CD4-positive, alpha-beta T cell (primary cell): ENCODE measurements at regions of chr14 and their contacts with region 1.

Region 1: DNA sequence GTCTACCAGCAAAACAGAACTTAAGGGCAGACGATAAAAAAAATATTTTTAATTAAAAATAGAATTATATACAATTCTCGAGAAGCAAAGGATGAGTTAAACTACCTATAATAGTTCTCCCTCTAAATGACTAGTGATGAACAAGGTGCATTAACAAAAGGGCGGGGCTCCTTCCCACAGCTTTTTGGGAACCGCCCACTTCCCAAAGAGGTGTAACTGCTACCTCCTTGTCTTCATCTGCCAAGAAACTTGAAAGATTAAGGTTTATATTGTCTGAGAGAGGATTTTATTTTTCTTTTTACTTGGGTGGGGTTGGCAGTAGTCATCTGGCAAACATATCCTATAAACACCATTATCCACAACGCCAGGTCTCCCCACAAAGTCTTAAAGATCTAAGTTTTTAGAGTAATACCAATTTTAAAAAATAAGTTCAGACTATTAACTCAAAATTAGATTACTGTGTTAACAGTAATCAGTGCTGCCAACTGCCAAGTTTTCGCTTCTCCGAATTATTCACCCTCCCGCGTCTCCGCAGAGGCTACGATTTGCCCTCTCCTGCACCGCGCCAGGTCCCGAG is 931 bp downstream of the RALGAPA1 start:
- DNase-seq: peak in 6 of 14 experiments; percentile 15 to 53 (median 40)
- ATAC-seq: no peak
- H3K4me3 ChIP-seq: peak overlapping the region; percentile 85
- H3K4me3 Mint-ChIP-seq: peak overlapping the region; percentile 99
- H3K27ac ChIP-seq: peak overlapping the region; percentile 75 to 88
- H3K27ac Mint-ChIP-seq: peak overlapping the region; percentile 88
- H3K4me1 ChIP-seq: peaks cover 17% of the 10 kb centered on the region
- H3K4me1 Mint-ChIP-seq: peaks cover 44% of the 10 kb centered on the region
- H3K27me3 ChIP-seq: no peaks in the 10 kb centered on the region
- H3K27me3 Mint-ChIP-seq: no peaks in the 10 kb centered on the region
- CTCF ChIP-seq: no peak

Region 2: DNA sequence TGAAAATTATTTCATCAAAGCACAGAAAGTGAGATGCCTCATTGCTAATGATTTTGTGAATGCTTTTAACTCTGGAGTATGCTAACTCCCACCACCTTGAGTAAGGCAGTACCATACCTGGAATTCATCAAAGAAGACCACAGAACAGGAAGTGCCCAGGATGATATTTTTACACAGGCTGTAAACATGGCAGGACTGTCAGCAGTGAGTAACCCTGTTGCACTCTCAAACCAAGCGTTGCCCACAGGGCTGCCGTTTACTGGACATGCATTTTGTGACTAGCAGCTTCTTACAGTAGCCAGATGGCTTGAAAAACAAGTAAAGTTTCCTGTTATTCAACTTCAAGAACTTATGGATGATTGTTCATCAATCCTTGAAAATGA is 41.5 kb before region 1 on chr14:
- CTCF ChIA-PET with region 1: no interaction called
- POLR2A ChIA-PET with region 1: no interaction called
- intact Hi-C with region 1: loop called (anchors 2 to 5 kb)
- DNase-seq: peak in 3 of 14 experiments; percentile 6 to 29 (median 11)
- ATAC-seq: peak; percentile 54
- H3K4me3 ChIP-seq: no peak overlapping the region
- H3K4me3 Mint-ChIP-seq: no peak overlapping the region
- H3K27ac ChIP-seq: no peak overlapping the region
- H3K27ac Mint-ChIP-seq: no peak overlapping the region
- H3K4me1 ChIP-seq: peaks cover 8% of the 10 kb centered on the region
- H3K4me1 Mint-ChIP-seq: peaks cover 18% of the 10 kb centered on the region
- H3K27me3 ChIP-seq: no peaks in the 10 kb centered on the region
- H3K27me3 Mint-ChIP-seq: no peaks in the 10 kb centered on the region
- CTCF ChIP-seq: no peak